Naive thymus-derived CD4-positive, alpha-beta T cell (primary cell): ENCODE measurements at regions of chr3 and their contacts with region 1.

Region 1: DNA sequence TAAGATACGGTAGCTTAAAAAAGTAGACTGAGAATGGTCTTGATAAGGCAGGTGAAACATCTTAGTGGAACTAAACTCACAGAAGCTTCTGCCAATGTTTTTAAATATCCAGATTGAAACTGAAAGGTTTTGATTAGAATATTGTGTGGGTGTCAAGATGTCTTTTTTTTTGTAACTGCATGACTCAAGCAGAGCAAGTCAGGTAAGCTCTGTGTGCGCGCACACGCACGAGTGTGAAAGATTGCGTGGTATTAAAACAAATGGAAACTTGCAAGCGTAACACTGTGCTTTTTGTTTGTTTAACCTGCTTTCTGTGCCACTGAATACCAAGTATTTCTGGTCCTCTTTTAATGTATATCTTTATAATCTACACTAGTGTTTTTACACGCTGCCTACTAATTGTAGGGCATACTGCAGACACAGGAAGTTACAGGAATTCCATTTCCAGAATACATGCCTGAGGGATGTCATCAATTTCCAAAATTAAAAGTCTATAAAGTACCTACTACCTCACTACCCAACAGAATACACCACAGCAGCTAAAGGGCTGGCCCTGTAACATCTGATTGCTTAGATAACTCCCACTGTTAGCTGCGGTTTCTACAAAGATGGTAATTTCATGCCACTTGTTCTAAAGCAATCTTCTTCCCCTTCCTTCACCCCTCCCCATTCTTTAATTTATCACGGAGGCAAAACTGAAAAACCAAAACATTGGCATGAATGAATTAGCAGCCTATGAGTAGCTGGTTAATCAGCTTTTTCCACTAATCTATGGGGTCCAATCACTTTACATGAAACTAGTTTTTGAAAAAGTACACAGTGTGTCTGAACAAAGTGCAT is 472.8 kb downstream of the SHQ1 start:
- DNase-seq: peak in 7 of 9 donors; percentile 3 to 50 (median 26)
- ATAC-seq: peak; percentile 82
- H3K4me3 ChIP-seq: no peak overlapping the region
- H3K4me3 Mint-ChIP-seq: peak overlapping the region in 8 of 10 donors; percentile 20 to 76 (median 44)
- H3K27ac ChIP-seq: peak overlapping the region; percentile 33
- H3K27ac Mint-ChIP-seq: peak overlapping the region in 8 of 9 donors; percentile 5 to 77 (median 28)
- H3K4me1 ChIP-seq: peaks cover 0 to 17% of the 10 kb centered on the region in 2 donors
- H3K4me1 Mint-ChIP-seq: peaks cover 10 to 85% (median 65%) of the 10 kb centered on the region in 7 donors
- H3K27me3 ChIP-seq: no peaks in the 10 kb centered on the region
- H3K27me3 Mint-ChIP-seq: no peaks in the 10 kb centered on the region

Region 2: GRCh38 chr3:70914862-70915261 is 1460.6 kb before region 1 on chr3:
- CTCF ChIA-PET with region 1: no interaction called
- POLR2A ChIA-PET with region 1: no interaction called
- intact Hi-C with region 1: loop called in 1 of 2 experiments (anchors 5 kb)
- DNase-seq: no peak
- ATAC-seq: no peak
- H3K4me3 ChIP-seq: no peak overlapping the region
- H3K4me3 Mint-ChIP-seq: no peak overlapping the region
- H3K27ac ChIP-seq: no peak overlapping the region
- H3K27ac Mint-ChIP-seq: no peak overlapping the region
- H3K4me1 ChIP-seq: no peaks in the 10 kb centered on the region
- H3K4me1 Mint-ChIP-seq: no peaks in the 10 kb centered on the region
- H3K27me3 ChIP-seq: no peaks in the 10 kb centered on the region
- H3K27me3 Mint-ChIP-seq: peaks cover 0 to 20% (median 7%) of the 10 kb centered on the region in 5 donors

Region 3: DNA sequence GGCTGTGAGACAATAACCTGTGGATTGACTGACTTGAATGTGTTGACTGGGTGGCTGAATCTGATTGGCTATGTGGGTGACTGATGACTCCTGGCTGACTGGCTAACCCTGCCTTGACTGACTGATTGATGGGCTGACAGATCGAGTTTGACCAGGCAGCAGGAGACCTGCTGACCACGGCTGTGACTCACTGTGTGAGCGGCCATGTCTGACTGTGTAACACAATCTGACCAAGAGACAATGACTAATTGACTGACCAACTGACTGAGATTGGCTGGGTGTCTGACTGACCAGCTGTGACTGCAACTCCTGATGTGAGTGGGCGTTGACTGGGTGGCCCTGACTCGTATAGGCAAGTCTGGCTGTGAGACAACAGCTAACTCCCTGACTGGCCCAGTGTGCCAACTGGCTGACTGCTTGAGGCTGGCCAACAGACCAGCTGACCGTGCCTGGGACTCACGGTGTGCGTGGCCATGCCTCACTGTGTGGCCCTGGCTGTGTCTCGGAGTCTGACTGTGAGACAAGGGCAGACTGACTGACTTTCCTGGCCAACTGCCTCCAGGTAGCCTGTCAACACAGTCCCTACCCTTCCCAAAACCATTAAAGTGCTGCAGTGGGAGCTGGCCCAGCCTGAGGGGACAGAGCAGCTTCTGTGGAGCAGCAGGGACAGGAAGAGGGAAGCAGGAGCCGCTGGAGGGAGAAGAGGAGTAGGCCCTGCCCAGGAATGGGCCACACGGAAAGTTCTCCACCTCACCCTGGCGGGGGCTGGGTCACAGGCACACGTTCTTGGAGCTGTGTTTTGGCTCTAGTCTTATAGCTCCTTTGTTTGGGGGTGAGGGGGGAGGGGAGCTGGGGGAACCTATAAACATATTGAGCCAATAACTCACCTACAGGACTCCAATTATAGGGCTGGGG is 36.1 kb before region 1 on chr3:
- CTCF ChIA-PET with region 1: no interaction called
- POLR2A ChIA-PET with region 1: no interaction called
- intact Hi-C with region 1: loop called in 1 of 2 experiments (anchors 5 kb)
- DNase-seq: no peak
- ATAC-seq: peak; percentile 76
- H3K4me3 ChIP-seq: no peak overlapping the region
- H3K4me3 Mint-ChIP-seq: no peak overlapping the region
- H3K27ac ChIP-seq: no peak overlapping the region
- H3K27ac Mint-ChIP-seq: no peak overlapping the region
- H3K4me1 ChIP-seq: peaks cover 0 to 16% of the 10 kb centered on the region in 2 donors
- H3K4me1 Mint-ChIP-seq: peaks cover 9 to 29% (median 25%) of the 10 kb centered on the region in 7 donors
- H3K27me3 ChIP-seq: no peaks in the 10 kb centered on the region
- H3K27me3 Mint-ChIP-seq: peaks cover 0 to 3% (median 0%) of the 10 kb centered on the region in 5 donors

Region 4: DNA sequence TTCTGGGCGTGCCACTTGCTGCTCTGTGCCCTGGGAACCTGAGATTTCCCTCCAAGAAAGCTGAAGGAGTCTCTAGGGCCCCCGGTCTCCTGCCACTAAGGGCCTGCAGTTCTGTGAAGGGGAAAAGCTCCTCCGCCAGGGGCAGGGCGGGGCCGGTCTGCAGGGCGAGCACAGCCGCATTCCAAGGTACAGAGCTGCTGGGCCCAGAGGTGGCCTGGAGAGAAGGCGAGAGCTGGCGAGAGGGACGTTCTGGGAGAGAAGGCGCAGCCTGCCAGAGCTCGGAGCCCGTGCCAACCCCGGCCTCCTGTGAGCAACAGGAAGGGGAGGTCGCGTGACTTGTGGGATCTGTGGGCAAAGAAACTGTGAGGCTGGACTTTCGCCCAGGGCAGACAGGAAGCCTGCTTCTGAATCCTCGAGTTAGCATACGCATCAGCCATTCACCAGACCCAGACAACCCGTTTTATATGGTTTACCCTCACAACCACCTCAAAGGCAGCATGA is 27.6 kb before region 1 on chr3:
- CTCF ChIA-PET with region 1: no interaction called
- POLR2A ChIA-PET with region 1: interaction called, 7 read pairs
- intact Hi-C with region 1: loop called (anchors 2 to 5 kb)
- DNase-seq: peak in 5 of 9 donors; percentile 37 to 44 (median 41)
- ATAC-seq: peak; percentile 44
- H3K4me3 ChIP-seq: no peak overlapping the region
- H3K4me3 Mint-ChIP-seq: peak overlapping the region in 7 of 10 donors; percentile 11 to 71 (median 60)
- H3K27ac ChIP-seq: peak overlapping the region; percentile 22
- H3K27ac Mint-ChIP-seq: peak overlapping the region in 8 of 9 donors; percentile 70 to 90 (median 86)
- H3K4me1 ChIP-seq: peaks cover 3 to 63% of the 10 kb centered on the region in 2 donors
- H3K4me1 Mint-ChIP-seq: peaks cover 37 to 69% (median 64%) of the 10 kb centered on the region in 7 donors
- H3K27me3 ChIP-seq: no peaks in the 10 kb centered on the region
- H3K27me3 Mint-ChIP-seq: peaks cover 0 to 12% (median 0%) of the 10 kb centered on the region in 5 donors

Region 5: GRCh38 chr3:72426618-72427397 is 51.4 kb after region 1 on chr3:
- CTCF ChIA-PET with region 1: no interaction called
- POLR2A ChIA-PET with region 1: no interaction called
- intact Hi-C with region 1: loop called in 1 of 2 experiments (anchors 5 kb)
- DNase-seq: no peak
- ATAC-seq: peak; percentile 24
- H3K4me3 ChIP-seq: no peak overlapping the region
- H3K4me3 Mint-ChIP-seq: peak overlapping the region in 9 of 10 donors; percentile 18 to 63 (median 45)
- H3K27ac ChIP-seq: no peak overlapping the region
- H3K27ac Mint-ChIP-seq: peak overlapping the region in 7 of 9 donors; percentile 6 to 84 (median 51)
- H3K4me1 ChIP-seq: peaks cover 8 to 21% of the 10 kb centered on the region in 2 donors
- H3K4me1 Mint-ChIP-seq: peaks cover 52 to 89% (median 77%) of the 10 kb centered on the region in 7 donors
- H3K27me3 ChIP-seq: no peaks in the 10 kb centered on the region
- H3K27me3 Mint-ChIP-seq: no peaks in the 10 kb centered on the region

Region 6: GRCh38 chr3:72818092-72818773 is 442.8 kb after region 1 on chr3:
- CTCF ChIA-PET with region 1: no interaction called
- POLR2A ChIA-PET with region 1: no interaction called
- intact Hi-C with region 1: no loop called
- DNase-seq: peak in 1 of 9 donors; percentile 4
- ATAC-seq: no peak
- H3K4me3 ChIP-seq: no peak overlapping the region
- H3K4me3 Mint-ChIP-seq: no peak overlapping the region
- H3K27ac ChIP-seq: no peak overlapping the region
- H3K27ac Mint-ChIP-seq: peak overlapping the region in 2 of 9 donors; percentile 14 to 56
- H3K4me1 ChIP-seq: peaks cover 0 to 25% of the 10 kb centered on the region in 2 donors
- H3K4me1 Mint-ChIP-seq: peaks cover 0 to 14% (median 8%) of the 10 kb centered on the region in 7 donors
- H3K27me3 ChIP-seq: no peaks in the 10 kb centered on the region
- H3K27me3 Mint-ChIP-seq: no peaks in the 10 kb centered on the region